ENCODE measurements at regions of chr19 and their contacts with region 1.

Region 1: GRCh38 chr19:23817519-23817918 is 58.8 kb upstream of the ZNF681 start:
- DNase-seq: peak in 6 of 9 donors; percentile 13 to 39 (median 26)
- ATAC-seq: peak; percentile 63
- H3K4me3 ChIP-seq: no peak overlapping the region
- H3K4me3 Mint-ChIP-seq: no peak overlapping the region
- H3K27ac ChIP-seq: no peak overlapping the region
- H3K27ac Mint-ChIP-seq: peak overlapping the region in 1 of 9 donors; percentile 4
- H3K4me1 ChIP-seq: no peaks in the 10 kb centered on the region
- H3K4me1 Mint-ChIP-seq: peaks cover 0 to 3% (median 0%) of the 10 kb centered on the region in 7 donors
- H3K27me3 ChIP-seq: no peaks in the 10 kb centered on the region
- H3K27me3 Mint-ChIP-seq: no peaks in the 10 kb centered on the region

Region 2: GRCh38 chr19:23777216-23777950 is 40.1 kb before region 1 on chr19:
- CTCF ChIA-PET with region 1: no interaction called
- POLR2A ChIA-PET with region 1: no interaction called
- intact Hi-C with region 1: loop called in 1 of 2 experiments (anchors 2 kb)
- DNase-seq: no peak
- ATAC-seq: no peak
- H3K4me3 ChIP-seq: no peak overlapping the region
- H3K4me3 Mint-ChIP-seq: no peak overlapping the region
- H3K27ac ChIP-seq: no peak overlapping the region
- H3K27ac Mint-ChIP-seq: peak overlapping the region in 4 of 9 donors; percentile 14 to 32 (median 18)
- H3K4me1 ChIP-seq: no peaks in the 10 kb centered on the region
- H3K4me1 Mint-ChIP-seq: peaks cover 0 to 15% (median 0%) of the 10 kb centered on the region in 7 donors
- H3K27me3 ChIP-seq: no peaks in the 10 kb centered on the region
- H3K27me3 Mint-ChIP-seq: no peaks in the 10 kb centered on the region

Region 3: DNA sequence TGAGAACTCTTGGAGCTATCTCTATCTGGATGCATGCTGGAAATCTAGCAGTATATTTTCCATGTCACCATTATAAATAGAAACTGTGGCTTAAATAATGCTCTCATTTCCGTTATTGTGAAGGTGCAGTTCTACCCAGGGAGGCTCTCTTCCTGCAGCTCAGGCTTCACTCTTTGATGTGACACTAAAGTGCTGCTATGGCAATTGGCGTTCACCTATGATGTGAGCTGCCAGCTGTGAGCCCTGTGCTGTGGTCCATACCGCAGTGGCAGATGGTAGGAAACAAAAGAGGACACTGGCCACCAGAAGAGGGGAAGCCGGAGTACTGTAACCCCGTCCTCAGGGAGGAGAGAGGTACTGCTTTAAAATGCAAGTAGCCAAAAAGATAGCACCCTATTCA is 18.2 kb before region 1 on chr19:
- CTCF ChIA-PET with region 1: interaction called, 5 read pairs
- POLR2A ChIA-PET with region 1: interaction called, 4 read pairs
- intact Hi-C with region 1: loop called in 1 of 2 experiments (anchors 1 kb)
- DNase-seq: peak in 7 of 9 donors; percentile 46 to 66 (median 61)
- ATAC-seq: peak; percentile 92
- H3K4me3 ChIP-seq: peak overlapping the region; percentile 31
- H3K4me3 Mint-ChIP-seq: peak overlapping the region; percentile 77 to 91 (median 84)
- H3K27ac ChIP-seq: peak overlapping the region; percentile 67
- H3K27ac Mint-ChIP-seq: peak overlapping the region; percentile 84 to 97 (median 92)
- H3K4me1 ChIP-seq: peaks cover 6% of the 10 kb centered on the region in 2 donors
- H3K4me1 Mint-ChIP-seq: peaks cover 10 to 49% (median 34%) of the 10 kb centered on the region in 7 donors
- H3K27me3 ChIP-seq: no peaks in the 10 kb centered on the region
- H3K27me3 Mint-ChIP-seq: no peaks in the 10 kb centered on the region

Measured in naive thymus-derived CD4-positive, alpha-beta T cell (primary cell).